ENCODE measurements at regions of chr15 and their contacts with region 1.

Region 1: GRCh38 chr15:39495871-39496840 is 84.7 kb upstream of the THBS1 start:
- DNase-seq: no peak
- ATAC-seq: no peak
- H3K4me3 ChIP-seq: no peak overlapping the region
- H3K27ac ChIP-seq: no peak overlapping the region
- H3K4me1 ChIP-seq: peaks cover 0 to 22% of the 10 kb centered on the region in 2 experiments; a peak in 3 of 5 replicates
- H3K27me3 ChIP-seq: peaks cover 2 to 3% of the 10 kb centered on the region in 2 experiments; a peak in 2 of 5 replicates
- CTCF ChIP-seq: no peak
- EP300 ChIP-seq: no peak
- POLR2A ChIP-seq: no peak
- RAD21 ChIP-seq: no peak

Region 2: DNA sequence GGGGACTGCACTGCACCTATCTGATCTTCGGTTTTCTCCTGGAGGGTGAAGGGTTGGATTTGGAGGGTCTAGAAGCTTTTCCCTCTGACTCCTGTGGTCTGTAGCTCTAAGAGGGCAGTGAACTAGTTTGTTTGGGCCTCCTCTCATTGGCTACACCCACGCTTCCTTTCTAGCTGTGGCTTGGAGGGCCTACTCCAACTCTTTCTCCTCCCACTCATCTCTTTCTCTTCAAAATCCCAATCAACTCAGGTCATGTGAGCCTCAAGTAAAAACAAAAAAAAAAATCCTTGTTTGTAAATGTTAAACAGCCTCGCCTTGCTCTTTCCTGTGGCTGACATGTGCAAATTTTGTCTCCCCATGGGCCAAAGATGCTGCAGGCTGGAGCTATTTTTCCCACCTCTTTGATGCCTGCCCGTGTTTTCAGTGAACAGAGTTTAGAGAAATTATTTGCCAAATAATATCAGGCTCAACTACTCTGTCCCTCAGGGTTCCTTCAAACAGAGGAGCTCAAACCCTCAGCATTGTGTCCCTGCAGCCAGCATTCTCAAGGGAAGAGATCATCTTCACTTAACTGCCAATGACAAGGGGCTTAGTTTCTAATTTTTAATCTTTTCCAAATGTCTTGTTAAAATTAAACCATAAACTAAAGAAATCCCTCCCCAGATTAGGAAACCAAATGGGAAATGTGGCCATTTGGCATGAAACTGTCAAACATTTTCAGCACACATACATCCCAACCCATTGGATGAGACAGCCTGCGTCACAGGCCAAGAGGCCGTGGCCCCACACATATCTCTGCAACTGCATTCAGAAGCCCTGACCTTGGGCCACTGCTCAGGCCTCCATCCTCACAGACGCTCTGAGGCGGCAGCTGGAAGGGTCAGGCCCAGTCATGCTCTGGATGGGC is 30.1 kb before region 1 on chr15:
- CTCF ChIA-PET with region 1: no interaction called
- POLR2A ChIA-PET with region 1: interaction called, 11 read pairs
- in situ Hi-C with region 1: no loop called
- intact Hi-C with region 1: no loop called
- DNase-seq: peak in 2 of 4 experiments; percentile 28 to 40
- ATAC-seq: peak; percentile 53
- H3K4me3 ChIP-seq: no peak overlapping the region
- H3K27ac ChIP-seq: no peak overlapping the region
- H3K4me1 ChIP-seq: peaks cover 0 to 14% of the 10 kb centered on the region in 2 experiments; a peak in 4 of 5 replicates
- H3K27me3 ChIP-seq: no peaks in the 10 kb centered on the region
- CTCF ChIP-seq: no peak
- EP300 ChIP-seq: no peak
- POLR2A ChIP-seq: no peak
- RAD21 ChIP-seq: no peak

Measured in K562 (cell line).